Endothelial cell of umbilical vein (primary cell): ENCODE measurements at regions of chr9 and their contacts with region 1.

Region 1: DNA sequence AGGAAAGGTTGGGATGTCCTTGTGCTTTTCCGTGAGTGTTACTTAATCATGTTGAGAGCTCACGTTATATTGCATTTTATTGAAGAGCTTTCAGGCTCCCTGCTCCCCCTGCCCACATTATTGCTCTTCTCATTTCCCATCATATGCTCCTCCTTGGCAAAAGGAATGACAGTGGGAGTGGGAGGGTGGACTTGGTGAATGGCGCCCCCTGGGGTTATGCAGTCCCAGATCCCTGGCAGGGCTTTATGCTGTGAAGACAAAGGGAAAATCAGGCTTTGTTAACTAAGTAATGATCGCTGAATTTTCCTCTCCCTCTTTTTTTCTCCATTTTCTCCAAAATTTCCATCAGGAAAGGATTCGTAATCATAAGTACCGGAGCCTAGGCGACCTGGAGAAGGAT is 166.6 kb downstream of the SMARCA2 start:
- DNase-seq: peak; percentile 36
- H3K4me3 ChIP-seq: no peak overlapping the region
- H3K27ac ChIP-seq: no peak overlapping the region
- H3K4me1 ChIP-seq: no peaks in the 10 kb centered on the region
- H3K27me3 ChIP-seq: no peaks in the 10 kb centered on the region
- CTCF ChIP-seq: peak; percentile 54 to 60
- POLR2A ChIP-seq: no peak

Region 2: GRCh38 chr9:1939926-1940368 is 241.8 kb before region 1 on chr9:
- CTCF ChIA-PET with region 1: interaction called, 3 read pairs
- POLR2A ChIA-PET with region 1: no interaction called
- dilution Hi-C with region 1: no loop called
- intact Hi-C with region 1: loop called (anchors 5 kb)
- DNase-seq: peak; percentile 10
- H3K4me3 ChIP-seq: no peak overlapping the region
- H3K27ac ChIP-seq: no peak overlapping the region
- H3K4me1 ChIP-seq: no peaks in the 10 kb centered on the region
- H3K27me3 ChIP-seq: no peaks in the 10 kb centered on the region
- CTCF ChIP-seq: peak; percentile 43 to 54
- POLR2A ChIP-seq: no peak

Region 3: GRCh38 chr9:1994180-1994579 is 187.6 kb before region 1 on chr9:
- CTCF ChIA-PET with region 1: no interaction called
- POLR2A ChIA-PET with region 1: no interaction called
- dilution Hi-C with region 1: no loop called
- intact Hi-C with region 1: no loop called
- DNase-seq: no peak
- H3K4me3 ChIP-seq: no peak overlapping the region
- H3K27ac ChIP-seq: no peak overlapping the region
- H3K4me1 ChIP-seq: no peaks in the 10 kb centered on the region
- H3K27me3 ChIP-seq: peaks cover 4 to 5% of the 10 kb centered on the region in 2 experiments
- CTCF ChIP-seq: no peak
- POLR2A ChIP-seq: no peak

Region 4: GRCh38 chr9:2132484-2133082 is 49.2 kb before region 1 on chr9:
- CTCF ChIA-PET with region 1: interaction called, 72 read pairs
- POLR2A ChIA-PET with region 1: no interaction called
- dilution Hi-C with region 1: no loop called
- intact Hi-C with region 1: loop called (anchors 1 kb)
- DNase-seq: peak; percentile 42
- H3K4me3 ChIP-seq: no peak overlapping the region
- H3K27ac ChIP-seq: no peak overlapping the region
- H3K4me1 ChIP-seq: peaks cover 15% of the 10 kb centered on the region
- H3K27me3 ChIP-seq: no peaks in the 10 kb centered on the region
- CTCF ChIP-seq: peak; percentile 40 to 48
- POLR2A ChIP-seq: no peak

Region 5: GRCh38 chr9:2144619-2145018 is 37.2 kb before region 1 on chr9:
- CTCF ChIA-PET with region 1: interaction called, 9 read pairs
- POLR2A ChIA-PET with region 1: no interaction called
- dilution Hi-C with region 1: no loop called
- intact Hi-C with region 1: loop called (anchors 5 kb)
- DNase-seq: no peak
- H3K4me3 ChIP-seq: no peak overlapping the region
- H3K27ac ChIP-seq: no peak overlapping the region
- H3K4me1 ChIP-seq: no peaks in the 10 kb centered on the region
- H3K27me3 ChIP-seq: no peaks in the 10 kb centered on the region
- CTCF ChIP-seq: no peak
- POLR2A ChIP-seq: no peak